GM13977 (cell line): ENCODE measurements at regions of chr19 and their contacts with region 1.

Region 1: GRCh38 chr19:17859533-17860330 is at the start of gene RPL18A:
- DNase-seq: peak; percentile 98
- CTCF ChIP-seq: peak; percentile 93

Region 2: DNA sequence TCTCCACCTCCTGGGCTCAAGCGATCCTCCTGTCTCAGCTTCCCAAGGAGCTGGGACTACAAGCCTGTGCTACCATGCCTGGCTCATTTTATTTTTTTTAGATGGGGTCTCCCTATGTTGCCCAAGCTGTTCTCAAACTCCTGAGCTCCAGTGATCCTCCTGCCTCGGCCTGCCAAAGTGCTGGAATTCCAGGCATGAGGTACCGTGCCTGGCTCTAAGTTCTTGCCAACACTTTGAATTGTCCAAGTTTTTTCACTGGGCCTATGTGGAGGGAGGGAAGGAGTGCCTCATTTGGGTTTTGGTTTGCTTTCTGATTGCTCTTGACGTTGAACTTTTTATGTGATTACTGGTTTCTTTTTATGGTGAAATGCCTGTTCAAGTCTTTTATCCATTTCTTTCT is 167.2 kb before region 1 on chr19:
- in situ Hi-C with region 1: loop called (anchors 10 kb)
- DNase-seq: no peak
- CTCF ChIP-seq: no peak